OCI-LY7 (cell line): ENCODE measurements at regions of chr4 and their contacts with region 1.

Region 1: DNA sequence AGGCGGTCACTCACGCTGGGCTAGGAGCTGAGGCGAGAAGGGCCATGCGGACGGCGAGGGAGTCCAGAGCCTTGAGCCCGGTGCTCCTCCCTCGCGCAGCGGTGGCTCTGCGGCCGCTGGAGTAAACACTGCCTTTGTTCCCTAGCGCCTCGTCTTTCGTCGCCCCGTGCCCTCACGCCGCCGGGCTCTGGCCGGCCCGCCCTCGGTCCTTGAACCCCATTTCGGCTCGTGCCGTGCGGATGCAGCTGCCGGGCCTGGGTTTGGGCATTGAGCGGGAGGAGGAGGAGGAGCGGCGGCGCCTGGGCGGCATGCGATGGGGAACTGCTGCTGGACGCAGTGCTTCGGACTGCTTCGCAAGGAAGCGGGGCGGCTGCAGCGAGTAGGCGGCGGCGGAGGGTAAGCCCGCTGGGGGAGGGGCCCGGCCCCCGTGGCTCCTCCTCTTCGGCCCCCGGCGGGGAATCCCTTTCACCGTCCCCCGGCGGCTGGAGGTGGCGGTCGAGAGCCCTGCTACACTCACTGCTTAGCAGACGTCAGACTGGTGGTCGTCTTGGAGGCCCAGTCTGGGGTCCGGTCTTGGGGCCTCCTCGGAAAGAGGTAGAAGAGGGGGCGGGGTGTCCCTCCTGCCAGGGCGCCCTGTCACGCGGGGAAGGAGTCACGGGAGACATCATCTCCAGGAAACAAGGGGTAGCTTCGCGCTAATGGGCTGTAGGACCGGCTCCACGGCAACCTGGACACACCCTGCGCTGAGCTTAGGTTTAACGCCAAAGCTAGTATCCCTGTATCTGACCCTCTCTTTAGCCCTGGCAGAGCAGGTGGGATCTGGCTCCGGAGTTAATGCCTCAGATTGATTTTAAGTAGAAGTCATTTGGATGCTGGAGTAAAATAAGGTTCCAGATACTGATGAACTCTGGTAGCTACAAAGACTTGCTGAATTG is at the start of gene AP1AR:
- DNase-seq: peak; percentile 92
- H3K4me3 ChIP-seq: peak within 1 kb of the TSS; percentile 87
- H3K27ac ChIP-seq: peak within 1 kb of the TSS; percentile 86
- H3K4me1 ChIP-seq: peaks cover 36% of the 10 kb centered on the region
- CTCF ChIP-seq: peak; percentile 74
- total RNA-seq, gene AP1AR: 18.2 and 24.9 TPM in 2 replicates

Region 2: DNA sequence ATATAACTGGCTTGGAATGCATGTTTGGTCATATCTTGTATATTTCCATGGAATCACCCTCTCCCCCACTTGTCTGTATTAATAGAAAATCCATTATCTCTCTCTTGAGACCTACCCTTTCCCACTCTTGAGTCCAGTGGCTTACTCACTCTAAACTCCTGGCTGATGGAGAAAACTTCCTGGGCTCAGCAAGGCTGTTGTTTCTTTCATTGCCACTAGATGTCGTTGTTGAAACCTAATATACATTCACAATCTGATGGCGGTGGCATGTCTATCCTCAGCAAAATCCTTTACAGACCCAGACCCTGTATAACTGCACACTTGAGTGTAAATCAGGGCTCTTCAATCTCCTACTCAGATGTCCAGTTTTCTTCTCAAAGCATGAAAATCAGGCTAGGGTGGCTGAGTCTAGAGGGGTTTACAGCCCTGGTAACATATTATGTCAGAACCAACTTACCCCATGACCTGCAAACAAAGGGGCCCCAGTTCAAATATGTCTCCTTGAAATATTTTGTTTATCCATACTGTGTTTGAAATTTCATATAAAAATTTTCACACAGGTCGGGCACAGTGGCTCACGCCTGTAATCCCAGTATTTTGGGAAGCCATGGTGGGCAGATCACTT is 156.8 kb before region 1 on chr4:
- CTCF ChIA-PET with region 1: no interaction called
- POLR2A ChIA-PET with region 1: no interaction called
- intact Hi-C with region 1: loop called (anchors 1 kb)
- DNase-seq: peak; percentile 68
- H3K4me3 ChIP-seq: no peak overlapping the region
- H3K27ac ChIP-seq: no peak overlapping the region
- H3K4me1 ChIP-seq: no peaks in the 10 kb centered on the region
- CTCF ChIP-seq: peak; percentile 96

Region 3: DNA sequence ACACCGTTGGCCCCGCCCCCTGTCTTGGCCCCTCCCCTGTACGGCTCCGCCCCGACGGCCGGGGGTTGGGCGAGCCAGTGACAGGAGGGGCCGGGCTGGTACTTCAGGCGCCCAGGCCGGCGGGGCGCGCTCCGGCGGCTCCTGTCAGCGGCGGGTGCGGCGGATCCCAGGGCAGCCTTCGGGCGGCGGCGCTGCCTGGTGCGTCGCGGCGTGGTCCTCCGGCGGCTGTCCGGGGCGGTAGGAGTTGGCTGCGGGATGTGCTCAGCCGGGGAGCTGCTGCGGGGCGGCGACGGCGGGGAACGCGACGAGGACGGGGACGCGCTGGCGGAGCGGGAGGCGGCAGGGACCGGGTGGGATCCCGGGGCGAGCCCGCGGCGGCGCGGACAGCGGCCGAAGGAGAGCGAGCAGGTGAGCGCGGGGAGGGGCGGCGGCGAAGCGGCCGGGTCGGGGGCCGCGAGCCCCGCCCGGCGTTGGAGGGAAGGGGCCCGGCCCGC is 86.7 kb before region 1 on chr4 and contains the start of gene FAM241A:
- CTCF ChIA-PET with region 1: no interaction called
- POLR2A ChIA-PET with region 1: interaction called, 8 read pairs
- intact Hi-C with region 1: loop called (anchors 1 kb)
- DNase-seq: peak; percentile 92
- H3K4me3 ChIP-seq: peak within 1 kb of the TSS; percentile 75
- H3K27ac ChIP-seq: peak within 1 kb of the TSS; percentile 44
- H3K4me1 ChIP-seq: peaks cover 40% of the 10 kb centered on the region
- CTCF ChIP-seq: no peak
- total RNA-seq, gene FAM241A: 2.1 and 2.5 TPM in 2 replicates

Region 4: GRCh38 chr4:112214390-112215264 is 17.4 kb before region 1 on chr4:
- CTCF ChIA-PET with region 1: no interaction called
- POLR2A ChIA-PET with region 1: interaction called, 14 read pairs
- intact Hi-C with region 1: no loop called
- DNase-seq: peak; percentile 51
- H3K4me3 ChIP-seq: no peak overlapping the region
- H3K27ac ChIP-seq: no peak overlapping the region
- H3K4me1 ChIP-seq: peaks cover 4% of the 10 kb centered on the region
- CTCF ChIP-seq: peak; percentile 84

Region 5: DNA sequence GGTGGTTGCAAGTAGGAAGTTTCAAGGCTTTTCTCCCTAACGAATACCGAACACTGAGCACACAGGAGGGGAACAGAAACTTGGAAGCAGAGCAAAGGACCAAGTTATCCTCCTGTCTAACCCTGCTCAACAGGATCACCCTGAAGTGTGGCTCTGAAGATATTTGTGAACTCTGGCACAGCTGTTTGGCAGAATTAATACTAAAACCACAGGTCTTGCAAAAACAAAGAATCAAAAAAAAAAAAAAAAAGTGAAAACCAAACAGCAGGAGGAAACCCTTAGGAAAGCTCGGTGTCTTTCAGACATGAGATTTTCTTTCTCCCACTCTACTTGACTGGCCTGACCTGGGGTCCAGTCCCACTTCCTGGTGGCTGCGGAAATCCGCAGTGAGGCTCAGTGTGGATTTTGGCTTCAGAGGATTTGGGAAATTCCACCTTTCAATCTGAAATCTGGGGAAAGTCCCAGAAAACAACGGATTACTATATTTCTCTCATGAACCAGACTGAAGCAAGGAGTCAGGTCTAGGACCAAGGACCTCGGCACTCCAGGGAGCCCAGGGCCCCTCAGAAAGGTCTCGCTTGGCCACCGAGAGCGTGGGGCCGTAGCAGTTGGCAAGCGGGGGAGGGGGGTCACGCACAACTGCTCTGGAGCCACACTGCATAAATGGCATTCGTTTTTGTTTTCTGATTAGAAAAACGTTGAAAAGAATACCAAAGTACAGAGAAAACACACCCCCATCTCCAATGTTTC is 52.8 kb after region 1 on chr4:
- CTCF ChIA-PET with region 1: no interaction called
- POLR2A ChIA-PET with region 1: interaction called, 9 read pairs
- intact Hi-C with region 1: loop called (anchors 2 kb)
- DNase-seq: peak; percentile 52
- H3K4me3 ChIP-seq: peak overlapping the region; percentile 96
- H3K27ac ChIP-seq: peak overlapping the region; percentile 94
- H3K4me1 ChIP-seq: peaks cover 77% of the 10 kb centered on the region
- CTCF ChIP-seq: no peak; the same call in 1 of the 2 replicates

Region 6: GRCh38 chr4:112523764-112524505 is 291.9 kb after region 1 on chr4:
- CTCF ChIA-PET with region 1: interaction called, 3 read pairs
- POLR2A ChIA-PET with region 1: interaction called, 4 read pairs
- intact Hi-C with region 1: loop called (anchors 1 kb)
- DNase-seq: peak; percentile 93
- H3K4me3 ChIP-seq: peak overlapping the region; percentile 69
- H3K27ac ChIP-seq: no peak overlapping the region
- H3K4me1 ChIP-seq: peaks cover 20% of the 10 kb centered on the region
- CTCF ChIP-seq: peak; percentile 99

Region 7: GRCh38 chr4:112931001-112931400 is 699.0 kb after region 1 on chr4:
- CTCF ChIA-PET with region 1: no interaction called
- POLR2A ChIA-PET with region 1: interaction called, 10 read pairs
- intact Hi-C with region 1: no loop called
- DNase-seq: no peak
- H3K4me3 ChIP-seq: no peak overlapping the region
- H3K27ac ChIP-seq: no peak overlapping the region
- H3K4me1 ChIP-seq: no peaks in the 10 kb centered on the region
- CTCF ChIP-seq: no peak

Region 8: GRCh38 chr4:113179996-113180395 is 948.0 kb after region 1 on chr4:
- CTCF ChIA-PET with region 1: no interaction called
- POLR2A ChIA-PET with region 1: no interaction called
- intact Hi-C with region 1: no loop called
- DNase-seq: no peak
- H3K4me3 ChIP-seq: no peak overlapping the region
- H3K27ac ChIP-seq: no peak overlapping the region
- H3K4me1 ChIP-seq: no peaks in the 10 kb centered on the region
- CTCF ChIP-seq: no peak